ENCODE measurements at regions of chr19 and their contacts with region 1.

Region 1: DNA sequence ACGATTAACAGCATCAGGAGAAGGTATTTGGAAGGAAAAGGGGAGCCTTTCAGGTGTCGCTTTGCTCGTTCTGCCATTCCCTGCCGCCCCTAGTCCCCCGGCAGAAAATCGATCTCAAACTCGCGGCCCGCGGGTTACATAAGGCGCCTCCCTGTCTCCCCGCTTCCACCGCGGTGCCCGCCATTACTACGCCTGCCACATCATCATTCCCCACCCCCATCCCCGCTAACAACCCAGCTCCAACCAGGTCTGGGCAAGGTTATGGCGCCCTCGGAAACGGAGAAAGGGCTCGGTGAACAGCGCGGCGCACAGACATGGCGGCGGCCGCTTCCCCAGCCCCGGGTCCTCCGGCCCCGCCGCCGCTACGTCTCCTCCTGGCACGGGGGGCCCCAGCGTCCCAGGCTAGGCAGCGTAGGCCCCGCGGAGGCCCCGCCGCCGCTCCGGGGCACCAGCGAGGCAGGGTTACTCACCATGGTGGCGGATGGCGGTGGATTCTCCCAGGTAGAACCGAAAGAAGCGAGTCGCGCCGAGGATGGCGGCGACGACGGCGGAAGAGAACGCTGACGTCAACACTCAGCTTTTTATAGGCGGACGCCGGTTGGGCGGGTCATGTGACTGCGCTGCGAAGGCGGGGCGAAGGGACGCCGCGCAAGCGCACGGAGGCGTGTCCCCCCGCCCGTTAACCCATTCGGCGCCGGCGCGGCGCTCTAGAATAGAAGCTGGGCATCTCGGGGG is at the start of gene EEF2:
- DNase-seq: peak; percentile 85
- total RNA-seq, gene EEF2: 2,780 and 2,952 TPM in 2 replicates

Region 2: GRCh38 chr19:3809881-3810707 is 175.0 kb before region 1 on chr19:
- in situ Hi-C with region 1: no loop called
- DNase-seq: no peak

Region 3: GRCh38 chr19:4208385-4209094 is 223.5 kb after region 1 on chr19:
- in situ Hi-C with region 1: loop called (anchors 25 kb)
- DNase-seq: peak; percentile 43